ENCODE measurements at regions of chr13 and their contacts with region 1.

Region 1: DNA sequence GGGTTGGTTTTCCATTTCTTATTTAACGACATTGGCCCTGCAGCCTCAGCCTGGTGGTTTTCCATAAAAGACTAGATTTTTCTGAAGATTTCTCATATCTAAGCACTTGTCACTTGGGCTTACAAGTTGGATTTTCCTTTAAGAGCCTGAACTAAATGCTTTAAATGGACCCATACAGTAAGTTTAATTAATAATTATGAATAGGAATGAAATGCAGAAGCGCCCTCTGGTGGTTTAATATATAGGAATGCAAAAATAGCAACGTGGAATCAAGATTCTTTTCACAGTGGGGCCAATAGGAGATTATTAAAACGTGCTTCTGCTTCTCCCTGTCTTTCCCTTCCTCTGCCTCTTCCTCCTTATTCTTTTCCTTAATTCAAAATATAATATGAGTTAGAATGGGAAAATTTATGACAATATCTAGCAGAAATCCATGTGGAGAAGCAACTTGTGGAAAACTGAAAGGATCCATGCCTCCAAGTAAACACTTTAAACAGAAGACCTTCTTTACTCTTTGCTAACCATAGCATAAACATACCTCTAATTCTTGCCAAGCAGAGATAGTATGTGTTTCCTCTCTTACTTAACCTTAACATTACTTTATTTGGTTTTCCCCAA is 324.0 kb downstream of the GPC5 start:
- DNase-seq: peak; percentile 17
- ATAC-seq: no peak
- H3K4me3 ChIP-seq: no peak overlapping the region
- H3K4me3 Mint-ChIP-seq: no peak overlapping the region
- H3K27ac ChIP-seq: no peak overlapping the region
- H3K27ac Mint-ChIP-seq: no peak overlapping the region
- H3K4me1 ChIP-seq: no peaks in the 10 kb centered on the region
- H3K4me1 Mint-ChIP-seq: no peaks in the 10 kb centered on the region
- H3K27me3 ChIP-seq: no peaks in the 10 kb centered on the region
- H3K27me3 Mint-ChIP-seq: no peaks in the 10 kb centered on the region
- CTCF ChIP-seq: peak; percentile 71

Region 2: GRCh38 chr13:91375116-91375729 is 347.2 kb before region 1 on chr13:
- CTCF ChIA-PET with region 1: interaction called, 3 read pairs
- POLR2A ChIA-PET with region 1: no interaction called
- intact Hi-C with region 1: loop called (anchors 1 kb)
- DNase-seq: peak; percentile 55
- ATAC-seq: peak; percentile 65
- H3K4me3 ChIP-seq: no peak overlapping the region
- H3K4me3 Mint-ChIP-seq: no peak overlapping the region
- H3K27ac ChIP-seq: no peak overlapping the region
- H3K27ac Mint-ChIP-seq: no peak overlapping the region
- H3K4me1 ChIP-seq: no peaks in the 10 kb centered on the region
- H3K4me1 Mint-ChIP-seq: peaks cover 4% of the 10 kb centered on the region
- H3K27me3 ChIP-seq: no peaks in the 10 kb centered on the region
- H3K27me3 Mint-ChIP-seq: no peaks in the 10 kb centered on the region
- CTCF ChIP-seq: peak; percentile 68

Region 3: DNA sequence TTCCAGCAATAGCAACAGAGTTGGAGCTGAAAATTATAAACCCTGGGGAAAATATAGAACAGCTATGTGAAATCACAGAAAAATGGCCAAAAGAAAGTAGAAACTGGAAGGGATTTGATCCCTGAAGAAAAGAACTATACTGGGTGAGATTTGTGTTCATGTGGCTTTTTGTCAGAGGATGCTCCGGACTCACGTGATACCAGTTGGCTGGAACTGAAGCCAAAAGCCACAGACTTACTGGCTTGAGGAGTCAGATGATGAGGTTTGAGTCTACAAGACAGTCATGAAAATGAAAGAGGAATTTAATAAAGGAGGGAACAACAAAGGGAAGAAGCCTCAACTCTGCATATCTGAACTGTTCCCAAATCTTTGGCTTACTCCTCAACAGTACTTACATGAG is 103.1 kb after region 1 on chr13:
- CTCF ChIA-PET with region 1: no interaction called
- POLR2A ChIA-PET with region 1: no interaction called
- intact Hi-C with region 1: no loop called
- DNase-seq: no peak
- ATAC-seq: no peak
- H3K4me3 ChIP-seq: no peak overlapping the region
- H3K4me3 Mint-ChIP-seq: no peak overlapping the region
- H3K27ac ChIP-seq: no peak overlapping the region
- H3K27ac Mint-ChIP-seq: no peak overlapping the region
- H3K4me1 ChIP-seq: no peaks in the 10 kb centered on the region
- H3K4me1 Mint-ChIP-seq: no peaks in the 10 kb centered on the region
- H3K27me3 ChIP-seq: no peaks in the 10 kb centered on the region
- H3K27me3 Mint-ChIP-seq: no peaks in the 10 kb centered on the region
- CTCF ChIP-seq: no peak